PC-9 (cell line): ENCODE measurements at regions of chr1 and their contacts with region 1.

Region 1: DNA sequence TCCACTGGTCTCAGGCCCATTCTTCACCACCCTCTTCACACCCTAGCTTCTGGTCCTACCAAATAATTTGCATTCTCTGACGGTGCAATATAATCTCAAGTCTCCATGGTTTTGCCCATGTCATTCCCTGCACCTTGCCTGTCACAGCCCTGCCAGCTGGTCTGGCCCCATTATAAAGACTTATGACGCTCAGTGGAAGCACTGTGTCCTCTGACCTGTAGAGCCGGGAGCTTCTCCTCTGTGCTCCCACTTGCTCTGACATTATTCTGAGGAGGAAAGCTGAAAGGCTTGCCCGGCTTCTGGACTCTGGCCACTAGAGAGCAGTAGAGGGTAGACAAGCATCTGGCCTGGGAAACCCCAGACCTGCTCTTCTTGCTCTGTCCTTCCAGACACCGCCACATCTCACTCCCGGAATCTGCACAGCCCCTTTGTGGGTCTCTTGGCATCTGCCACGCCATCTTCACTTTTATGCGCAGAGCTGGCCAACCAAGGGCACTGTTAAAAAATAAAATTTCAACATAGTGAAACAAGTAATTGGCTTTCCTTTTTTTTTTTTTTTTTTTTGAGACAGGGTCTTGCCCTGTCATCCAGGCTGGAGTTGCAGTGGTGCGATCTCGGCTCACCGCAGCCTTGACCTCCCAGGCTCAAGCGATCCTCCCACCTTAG is 44.4 kb downstream of the NENF start:
- DNase-seq: peak; percentile 74 to 81
- H3K4me3 ChIP-seq: no peak overlapping the region
- H3K27ac ChIP-seq: no peak overlapping the region
- H3K4me1 ChIP-seq: peaks cover 12% of the 10 kb centered on the region
- H3K27me3 ChIP-seq: no peaks in the 10 kb centered on the region
- CTCF ChIP-seq: peak; percentile 92

Region 2: GRCh38 chr1:212514056-212514614 is 37.0 kb after region 1 on chr1:
- CTCF ChIA-PET with region 1: interaction called, 12 read pairs
- POLR2A ChIA-PET with region 1: interaction called, 3 read pairs
- intact Hi-C with region 1: loop called (anchors 5 kb)
- DNase-seq: peak; percentile 83 to 96
- H3K4me3 ChIP-seq: peak overlapping the region; percentile 25; the same call in 1 of the 2 replicates
- H3K27ac ChIP-seq: peak overlapping the region; percentile 76
- H3K4me1 ChIP-seq: peaks cover 28% of the 10 kb centered on the region
- H3K27me3 ChIP-seq: no peaks in the 10 kb centered on the region
- CTCF ChIP-seq: no peak; the same call in 1 of the 2 replicates

Region 3: DNA sequence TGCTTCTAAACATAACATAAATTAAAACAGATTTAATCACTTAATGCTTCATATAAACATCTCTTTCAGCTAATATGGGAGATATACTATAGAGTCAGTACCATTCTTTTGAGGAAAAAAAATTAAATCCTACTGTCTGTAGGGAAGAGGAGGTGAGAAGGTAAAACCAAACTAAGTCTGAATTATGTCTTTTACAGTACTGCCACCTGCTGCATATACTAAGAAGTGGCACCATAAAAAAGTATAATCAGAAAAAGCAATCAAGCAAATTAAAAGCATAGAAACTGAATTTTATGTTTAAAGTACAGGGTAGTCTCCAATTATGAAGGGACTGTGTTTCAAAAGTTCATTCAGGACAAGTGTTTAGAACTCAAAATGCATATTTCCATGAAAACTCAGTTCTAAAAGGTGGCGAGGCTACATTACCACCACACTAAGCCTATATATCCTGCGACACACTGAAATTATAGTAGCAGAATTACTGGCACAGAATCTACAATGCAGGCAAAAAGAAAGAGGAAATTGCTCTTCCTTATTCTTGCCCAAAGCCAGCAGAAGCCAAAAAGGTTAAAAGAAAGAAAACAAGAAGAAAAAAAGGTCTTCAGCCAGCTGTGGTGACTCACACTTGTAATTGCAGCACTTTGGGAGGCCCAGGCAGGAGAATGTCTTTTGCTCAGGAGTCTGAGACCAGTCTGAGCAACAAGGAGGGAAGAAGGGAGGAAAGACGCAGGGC is 305.4 kb after region 1 on chr1:
- CTCF ChIA-PET with region 1: no interaction called
- POLR2A ChIA-PET with region 1: no interaction called
- intact Hi-C with region 1: loop called (anchors 5 kb)
- DNase-seq: peak in 1 of 2 experiments; percentile 38
- H3K4me3 ChIP-seq: no peak overlapping the region
- H3K27ac ChIP-seq: no peak overlapping the region
- H3K4me1 ChIP-seq: no peaks in the 10 kb centered on the region
- H3K27me3 ChIP-seq: no peaks in the 10 kb centered on the region
- CTCF ChIP-seq: peak; percentile 81